Gastrocnemius medialis (tissue), 4 donors: ENCODE measurements at regions of chr12 and their contacts with region 1.

Region 1: DNA sequence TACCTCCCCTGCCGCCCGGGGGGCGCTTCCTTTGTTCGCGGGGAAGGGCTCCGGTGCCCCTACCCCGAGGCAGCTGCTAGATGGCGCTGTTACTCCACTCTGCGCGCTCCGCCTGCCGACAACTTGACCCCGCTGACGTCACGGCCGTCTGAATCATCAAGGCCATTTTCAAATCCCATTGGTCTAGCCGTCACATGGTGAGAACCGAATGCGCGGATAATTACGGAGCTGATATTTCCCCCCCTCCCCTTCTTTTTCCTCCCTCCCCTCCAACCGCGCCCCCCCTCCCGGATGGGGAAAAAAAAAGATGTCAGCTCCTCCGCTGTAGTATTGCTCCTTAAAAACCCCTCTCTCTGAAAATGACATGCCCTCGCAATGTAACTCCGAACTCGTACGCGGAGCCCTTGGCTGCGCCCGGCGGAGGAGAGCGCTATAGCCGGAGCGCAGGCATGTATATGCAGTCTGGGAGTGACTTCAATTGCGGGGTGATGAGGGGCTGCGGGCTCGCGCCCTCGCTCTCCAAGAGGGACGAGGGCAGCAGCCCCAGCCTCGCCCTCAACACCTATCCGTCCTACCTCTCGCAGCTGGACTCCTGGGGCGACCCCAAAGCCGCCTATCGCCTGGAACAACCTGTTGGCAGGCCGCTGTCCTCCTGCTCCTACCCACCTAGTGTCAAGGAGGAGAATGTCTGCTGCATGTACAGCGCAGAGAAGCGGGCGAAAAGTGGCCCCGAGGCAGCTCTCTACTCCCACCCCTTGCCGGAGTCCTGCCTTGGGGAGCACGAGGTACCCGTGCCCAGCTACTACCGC is at the start of gene HOXC10:
- DNase-seq: peak; percentile 97
- ATAC-seq: peak; percentile 81 to 85
- H3K4me3 ChIP-seq: peak within 1 kb of the TSS; percentile 68 to 85 (median 82)
- H3K27ac ChIP-seq: peak within 1 kb of the TSS; percentile 94 to 100 (median 98)
- H3K4me1 ChIP-seq: peaks cover 32 to 41% of the 10 kb centered on the region in 2 donors
- H3K27me3 ChIP-seq: peaks cover 0 to 38% (median 0%) of the 10 kb centered on the region in 3 donors
- CTCF ChIP-seq: peak; percentile 64 to 92 (median 82)
- POLR2A ChIP-seq: peak; percentile 45 to 49
- total RNA-seq, gene HOXC10: 23.9 to 48.3 (median 40.3) TPM

Region 2: GRCh38 chr12:54005853-54006686 is 21.0 kb after region 1 on chr12:
- in situ Hi-C with region 1: no loop called
- intact Hi-C with region 1: no loop called
- DNase-seq: peak; percentile 83 to 91
- ATAC-seq: peak; percentile 63 to 67
- H3K4me3 ChIP-seq: peak overlapping the region; percentile 24 to 82 (median 63)
- H3K27ac ChIP-seq: peak overlapping the region; percentile 94 to 100 (median 98)
- H3K4me1 ChIP-seq: peaks cover 31 to 64% of the 10 kb centered on the region in 2 donors
- H3K27me3 ChIP-seq: no peaks in the 10 kb centered on the region
- CTCF ChIP-seq: peak; percentile 91 to 99 (median 97)
- POLR2A ChIP-seq: no peak

Region 3: GRCh38 chr12:54017878-54018467 is 32.9 kb after region 1 on chr12:
- in situ Hi-C with region 1: no loop called
- intact Hi-C with region 1: loop called (anchors 2 kb)
- DNase-seq: peak; percentile 80 to 86
- ATAC-seq: peak; percentile 49 to 56
- H3K4me3 ChIP-seq: peak overlapping the region; percentile 62 to 70 (median 68)
- H3K27ac ChIP-seq: peak overlapping the region; percentile 94 to 100 (median 98)
- H3K4me1 ChIP-seq: peaks cover 59 to 71% of the 10 kb centered on the region in 2 donors
- H3K27me3 ChIP-seq: no peaks in the 10 kb centered on the region
- CTCF ChIP-seq: peak in 1 of 5 experiments; percentile 26
- POLR2A ChIP-seq: peak; percentile 84 to 89

Region 4: DNA sequence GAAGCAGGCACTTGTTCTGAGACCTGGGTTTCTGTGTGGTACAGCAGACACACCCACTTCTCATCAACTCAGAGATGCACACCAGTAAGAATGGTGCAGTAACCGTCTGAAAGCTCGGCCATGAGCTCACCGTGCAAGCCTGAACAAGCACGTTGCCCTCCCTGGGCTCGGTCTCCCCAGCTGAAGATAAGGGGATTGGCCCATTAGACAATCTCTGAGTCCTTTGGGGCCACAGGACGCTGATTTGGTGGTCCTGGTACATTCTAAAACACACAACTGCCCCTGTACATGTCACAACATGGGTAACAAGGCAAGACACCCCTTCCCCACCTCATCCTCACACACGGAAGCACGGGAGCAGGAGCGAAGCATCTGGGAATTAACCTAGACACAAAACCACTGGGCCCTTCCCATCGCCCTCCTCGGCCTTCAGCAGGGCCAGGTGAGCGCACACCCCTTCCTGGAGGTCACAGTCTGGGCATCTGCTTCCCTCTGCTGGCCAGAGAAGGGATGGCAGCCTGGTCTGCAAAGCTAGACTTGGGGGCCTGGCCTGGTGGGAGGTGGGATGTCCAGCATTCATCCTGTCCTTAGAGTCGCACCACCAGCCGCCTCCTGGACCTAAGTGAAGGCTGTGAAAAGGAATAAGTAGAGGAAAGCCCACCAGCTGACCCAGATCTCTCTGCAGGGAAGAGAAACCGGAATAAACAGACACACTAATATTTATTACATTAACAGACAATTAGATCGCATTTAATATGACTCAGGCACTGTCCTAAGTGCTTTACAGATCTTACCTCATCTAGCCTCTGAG is 222.6 kb after region 1 on chr12:
- in situ Hi-C with region 1: loop called (anchors 10 to 25 kb)
- intact Hi-C with region 1: no loop called
- DNase-seq: peak; percentile 60 to 79
- ATAC-seq: peak; percentile 76 to 90
- H3K4me3 ChIP-seq: no peak overlapping the region
- H3K27ac ChIP-seq: peak overlapping the region in 1 of 4 donors; percentile 33
- H3K4me1 ChIP-seq: no peaks in the 10 kb centered on the region
- H3K27me3 ChIP-seq: no peaks in the 10 kb centered on the region
- CTCF ChIP-seq: peak; percentile 90 to 95 (median 95)
- POLR2A ChIP-seq: no peak

Region 5: DNA sequence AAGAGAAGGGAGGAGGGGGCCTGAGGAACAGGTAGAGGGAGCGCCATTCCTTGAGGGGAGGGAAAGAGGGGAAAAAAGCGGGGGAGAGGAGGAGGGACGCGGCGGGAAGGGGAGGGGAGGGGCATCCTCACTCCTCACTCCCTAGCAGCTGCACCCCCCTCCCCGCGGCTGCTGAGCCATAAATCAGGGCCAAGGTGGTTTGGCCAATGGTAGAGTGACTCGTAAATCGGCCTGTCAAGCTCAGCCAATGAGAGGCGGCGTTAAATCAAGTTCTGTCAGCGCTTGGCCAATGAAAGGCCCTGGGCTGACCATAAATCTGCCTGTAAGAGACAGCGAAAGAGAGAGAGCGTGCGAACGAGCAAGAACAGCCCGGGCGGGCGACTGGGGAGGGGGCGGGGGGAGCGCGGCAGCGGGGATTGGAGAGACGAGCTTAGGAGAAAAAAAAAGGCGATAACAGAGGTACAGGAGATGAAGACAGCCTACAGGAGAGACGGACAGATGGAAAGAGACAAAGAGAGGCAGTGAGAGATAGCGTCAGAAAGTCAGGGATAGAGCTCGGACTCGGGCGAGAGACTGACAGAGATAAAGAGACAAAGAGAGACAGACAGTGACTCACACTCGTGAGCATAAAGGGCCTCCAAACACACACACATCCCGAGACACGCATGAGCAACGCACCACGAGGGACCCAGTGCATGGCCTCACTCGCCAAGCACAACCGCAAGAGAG is 374.1 kb after region 1 on chr12:
- in situ Hi-C with region 1: loop called in 2 of 4 experiments (anchors 25 kb)
- intact Hi-C with region 1: loop called (anchors 2 kb)
- DNase-seq: peak; percentile 98 to 99
- ATAC-seq: peak; percentile 97 to 98
- H3K4me3 ChIP-seq: peak overlapping the region; percentile 69 to 86 (median 76)
- H3K27ac ChIP-seq: peak overlapping the region; percentile 88 to 94 (median 89)
- H3K4me1 ChIP-seq: peaks cover 12 to 18% of the 10 kb centered on the region in 2 donors
- H3K27me3 ChIP-seq: no peaks in the 10 kb centered on the region
- CTCF ChIP-seq: peak in 1 of 5 experiments; percentile 6
- POLR2A ChIP-seq: peak; percentile 52 to 72